Right ventricle myocardium inferior (tissue), 1 donor: ENCODE measurements at regions of chr12 and their contacts with region 1.

Region 1: GRCh38 chr12:63802012-63802608 is 22.4 kb downstream of the RXYLT1 start:
- DNase-seq: no peak
- ATAC-seq: no peak

Region 2: DNA sequence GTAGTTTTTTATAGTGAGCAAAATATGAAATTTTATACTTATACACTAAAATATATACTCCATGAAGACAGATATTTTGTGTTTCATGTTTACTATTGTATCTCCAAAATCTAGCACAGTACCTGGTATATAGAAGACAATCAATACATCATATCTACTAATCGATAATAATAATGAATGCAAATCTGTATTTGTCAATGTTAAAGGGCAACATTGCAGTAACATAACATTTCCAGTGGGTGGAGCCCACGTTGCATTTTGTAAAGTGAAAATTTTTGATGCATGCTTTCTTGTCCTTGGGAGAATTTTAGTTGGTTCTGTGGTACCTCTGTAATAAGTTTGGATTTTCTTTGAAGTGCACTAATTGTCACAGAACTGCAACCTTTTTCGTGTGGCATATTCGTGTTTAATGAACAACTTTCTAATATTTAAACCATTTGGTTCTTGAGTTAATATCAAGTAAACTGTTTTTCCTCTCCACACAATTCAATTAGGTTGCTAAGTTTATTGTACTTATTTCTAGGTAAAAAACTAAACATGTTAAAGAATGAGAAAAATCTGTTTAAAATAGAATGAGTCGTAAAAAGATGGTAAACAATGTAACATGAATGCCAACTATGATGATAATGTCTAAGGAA is 698.5 kb before region 1 on chr12:
- intact Hi-C with region 1: loop called (anchors 5 kb)
- DNase-seq: no peak
- ATAC-seq: no peak

Region 3: DNA sequence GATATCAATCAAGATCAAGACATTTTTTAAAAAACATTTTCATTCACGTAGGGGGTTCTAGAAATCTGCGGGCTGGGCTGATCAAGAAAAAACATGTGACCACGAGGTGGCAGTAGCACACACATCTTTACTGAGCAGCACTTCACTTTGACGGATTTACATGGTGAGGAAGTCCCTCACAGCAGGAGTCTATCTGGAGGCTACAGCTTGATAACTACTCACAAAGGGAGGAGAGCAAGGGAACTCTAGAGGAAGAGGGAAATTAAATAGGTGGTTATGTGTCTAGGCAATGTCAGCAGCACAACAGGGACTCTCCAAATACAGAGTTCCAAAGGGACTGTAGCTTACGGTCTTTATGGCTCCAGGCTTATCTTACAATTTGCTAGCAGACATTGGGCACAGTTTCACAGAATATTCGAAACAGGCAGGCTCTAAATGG is 381.9 kb before region 1 on chr12:
- intact Hi-C with region 1: loop called (anchors 10 kb)
- DNase-seq: no peak
- ATAC-seq: peak; percentile 56

Region 4: DNA sequence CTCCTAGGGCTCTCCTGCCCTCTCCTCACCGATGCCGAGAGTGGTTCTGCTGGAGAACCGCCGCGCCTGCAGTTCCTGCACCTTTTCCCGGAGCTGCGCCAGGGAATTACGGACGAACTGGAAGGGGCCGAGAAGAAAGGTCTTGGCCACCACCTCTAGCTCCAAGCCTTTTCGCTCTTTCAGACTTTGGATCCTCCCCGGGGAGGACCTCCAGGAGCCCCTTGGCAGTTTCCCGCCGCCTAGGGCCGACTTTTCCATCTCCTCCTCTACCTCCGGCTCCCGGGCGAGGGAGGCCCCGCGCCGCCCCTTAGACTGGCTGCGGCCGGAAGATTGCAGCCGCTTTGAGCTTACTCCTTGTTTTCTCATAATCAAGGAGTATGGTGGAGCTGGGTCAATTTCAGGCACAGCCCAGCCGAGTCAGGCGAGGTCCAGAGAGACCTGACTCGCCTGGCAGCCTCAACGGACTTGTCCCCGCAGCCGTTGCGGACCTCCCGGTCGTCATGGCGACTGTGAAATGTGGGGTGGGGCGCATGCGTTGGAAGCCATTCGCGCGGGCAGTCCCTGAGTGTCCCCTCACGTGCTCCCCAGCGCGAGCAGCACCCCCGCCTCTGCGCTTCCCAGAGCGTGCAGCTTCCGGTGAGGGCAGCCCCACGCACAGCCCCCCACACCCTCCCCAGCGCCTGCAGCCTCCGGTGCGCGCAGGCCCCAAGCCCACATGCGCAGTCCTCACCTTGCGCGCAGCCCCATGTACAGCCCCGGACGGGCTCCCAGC is 133.9 kb before region 1 on chr12 and contains the start of gene DPY19L2:
- intact Hi-C with region 1: loop called (anchors 5 kb)
- DNase-seq: peak; percentile 88
- ATAC-seq: peak; percentile 98
- total RNA-seq, gene DPY19L2: 41.0 TPM